ENCODE measurements at regions of chr1 and their contacts with region 1.

Region 1: GRCh38 chr1:24586970-24587820 is 31.3 kb downstream of the NCMAP start:
- DNase-seq: peak; percentile 79
- CTCF ChIP-seq: peak; percentile 68

Region 2: DNA sequence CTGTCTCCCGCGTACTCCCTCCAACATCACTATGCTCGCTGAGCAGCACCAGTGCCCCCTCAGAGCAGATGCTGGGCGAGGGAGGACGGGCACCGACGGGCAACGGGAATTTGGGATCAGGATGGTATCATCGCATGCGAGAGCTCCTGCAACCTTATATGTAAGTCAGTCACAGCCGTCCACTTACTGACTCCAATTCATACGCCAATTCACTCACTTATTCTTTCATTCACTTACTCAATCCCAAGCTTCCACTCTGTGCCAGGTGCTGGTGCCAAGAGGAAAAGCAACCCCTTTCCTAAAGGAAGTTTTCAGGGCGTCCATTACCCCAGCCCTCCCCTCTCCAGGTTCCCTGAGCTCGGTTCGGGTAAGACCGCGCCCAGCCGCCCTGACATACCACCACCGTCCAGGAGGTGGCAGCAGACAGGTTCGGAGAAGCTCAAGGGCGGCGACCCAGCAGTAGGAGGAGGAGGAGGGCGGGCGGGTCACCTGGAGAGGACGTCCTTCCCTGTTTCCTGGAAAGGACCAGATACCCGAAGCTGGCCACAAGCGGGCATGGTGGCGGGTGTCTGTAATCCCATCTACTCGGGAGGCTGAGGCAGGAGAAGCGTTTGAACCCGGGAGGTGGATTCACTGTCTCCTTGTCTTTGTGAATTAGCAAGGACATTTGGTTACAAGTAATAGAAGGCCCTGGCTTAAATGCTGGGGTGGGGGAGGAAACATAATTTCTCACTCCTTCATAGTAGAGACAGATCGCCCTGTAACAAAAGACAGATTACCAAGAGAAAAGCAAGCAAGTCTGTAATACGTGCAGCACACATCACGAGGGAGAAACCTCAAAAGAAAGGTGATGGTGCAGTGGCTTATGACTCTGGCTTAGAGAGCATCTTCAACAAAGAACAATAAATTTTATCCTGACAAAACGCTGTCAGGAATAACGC is 436.7 kb before region 1 on chr1:
- CTCF ChIA-PET with region 1: interaction called, 17 read pairs
- POLR2A ChIA-PET with region 1: no interaction called
- DNase-seq: peak; percentile 86
- CTCF ChIP-seq: peak; percentile 97

Region 3: GRCh38 chr1:24503870-24504523 is 83.2 kb before region 1 on chr1:
- CTCF ChIA-PET with region 1: interaction called, 10 read pairs
- POLR2A ChIA-PET with region 1: no interaction called
- DNase-seq: no peak
- CTCF ChIP-seq: no peak

Region 4: GRCh38 chr1:24547195-24547594 is 40.0 kb before region 1 on chr1:
- CTCF ChIA-PET with region 1: interaction called, 10 read pairs
- POLR2A ChIA-PET with region 1: no interaction called
- DNase-seq: no peak
- CTCF ChIP-seq: no peak

Region 5: GRCh38 chr1:24575915-24576587 is 11.1 kb before region 1 on chr1:
- CTCF ChIA-PET with region 1: interaction called, 33 read pairs
- POLR2A ChIA-PET with region 1: no interaction called
- DNase-seq: no peak
- CTCF ChIP-seq: no peak

Region 6: GRCh38 chr1:24635195-24635843 is 48.1 kb after region 1 on chr1:
- CTCF ChIA-PET with region 1: interaction called, 12 read pairs
- POLR2A ChIA-PET with region 1: interaction called, 3 read pairs
- DNase-seq: peak; percentile 67
- CTCF ChIP-seq: peak; percentile 72